Panc1 (cell line): ENCODE measurements at regions of chr4 and their contacts with region 1.

Region 1: GRCh38 chr4:7539659-7540058 is 104.9 kb upstream of the PSAPL1 start:
- DNase-seq: no peak
- ATAC-seq: peak; percentile 60; the same call in 1 of the 2 replicates
- H3K4me3 ChIP-seq: no peak overlapping the region
- H3K27ac ChIP-seq: no peak overlapping the region
- H3K4me1 ChIP-seq: no peaks in the 10 kb centered on the region
- H3K27me3 ChIP-seq: no peaks in the 10 kb centered on the region
- CTCF ChIP-seq: no peak

Region 2: DNA sequence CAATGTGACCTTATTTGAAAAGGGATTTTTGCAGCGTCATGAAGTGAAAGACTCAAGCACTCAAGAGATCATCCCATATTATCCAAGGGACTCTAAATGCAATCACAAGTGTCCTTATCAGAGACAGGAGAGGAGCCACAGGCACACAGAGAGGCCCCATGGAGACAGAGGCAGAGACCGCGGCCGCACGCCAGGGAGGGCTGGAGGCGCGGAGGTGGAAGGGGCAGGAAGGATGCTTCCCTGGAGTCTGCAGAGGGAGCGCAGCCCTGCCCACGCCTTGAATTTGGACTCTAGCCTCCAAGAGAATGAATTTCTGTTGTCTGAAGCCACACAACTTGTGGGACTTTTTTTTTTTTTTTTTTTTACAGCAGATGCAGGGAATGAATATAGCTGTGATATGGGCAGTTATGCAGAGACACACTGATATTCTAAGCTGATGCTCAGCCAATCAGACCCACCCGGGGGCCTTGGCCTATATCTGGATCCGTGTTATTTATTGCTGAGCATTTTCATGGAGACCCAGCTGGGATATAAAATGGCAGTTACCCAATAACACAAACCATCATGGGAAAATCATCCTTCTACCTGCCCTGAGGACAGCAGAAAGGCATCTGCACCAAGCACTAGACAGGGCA is 139.9 kb after region 1 on chr4:
- CTCF ChIA-PET with region 1: interaction called, 10 read pairs
- POLR2A ChIA-PET with region 1: no interaction called
- in situ Hi-C with region 1: no loop called
- intact Hi-C with region 1: no loop called
- DNase-seq: no peak
- ATAC-seq: no peak
- H3K4me3 ChIP-seq: no peak overlapping the region
- H3K27ac ChIP-seq: no peak overlapping the region
- H3K4me1 ChIP-seq: no peaks in the 10 kb centered on the region
- H3K27me3 ChIP-seq: no peaks in the 10 kb centered on the region
- CTCF ChIP-seq: no peak